Pancreas (tissue), 10 donors: ENCODE measurements at regions of chr10 and their contacts with region 1.

Region 1: DNA sequence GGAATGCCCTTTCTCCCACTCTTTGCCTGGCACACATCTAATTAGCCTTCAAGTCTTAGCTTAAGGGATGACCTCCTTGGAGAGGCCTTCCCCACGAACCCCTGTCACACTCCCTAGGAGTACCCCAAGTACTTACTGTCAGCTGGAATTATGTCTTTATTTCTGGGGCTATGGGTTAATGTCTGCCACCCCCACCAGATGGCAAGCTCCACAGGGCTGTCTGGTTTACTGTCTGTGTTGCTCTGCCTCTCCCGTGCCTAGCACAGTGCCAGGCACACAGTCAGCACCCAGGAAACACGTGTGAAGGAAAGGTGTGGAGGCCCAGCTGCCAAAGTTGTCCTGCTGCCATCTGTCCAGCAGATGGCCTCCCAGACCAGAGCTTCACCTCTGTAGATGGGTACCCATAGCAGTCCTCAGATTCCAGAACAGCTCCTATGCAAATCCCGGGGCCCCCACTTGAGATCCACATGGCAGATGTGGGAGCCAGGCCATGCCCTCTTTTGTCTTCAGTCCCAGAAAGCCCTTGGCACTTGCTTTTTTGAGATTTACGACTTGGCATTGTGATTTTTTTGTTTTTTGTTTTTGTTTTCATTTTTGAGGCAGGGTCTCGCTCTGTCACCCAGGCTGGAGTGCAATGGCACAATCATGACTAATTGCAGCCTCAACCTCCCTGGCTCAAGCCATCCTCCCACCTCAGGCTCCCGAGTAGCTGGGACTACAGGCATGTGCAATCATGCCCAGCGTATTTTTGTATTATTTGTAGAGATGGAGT is 17.2 kb upstream of the PALD1 start:
- DNase-seq: peak in 3 of 6 donors; percentile 31 to 62 (median 44)
- ATAC-seq: peak; percentile 53 to 76 (median 70)
- H3K4me3 ChIP-seq: no peak overlapping the region
- H3K27ac ChIP-seq: peak overlapping the region in 3 of 4 donors; percentile 28 to 59 (median 59)
- H3K4me1 ChIP-seq: peaks cover 0 to 4% (median 3%) of the 10 kb centered on the region in 3 donors
- H3K27me3 ChIP-seq: no peaks in the 10 kb centered on the region
- CTCF ChIP-seq: peak; percentile 45 to 82 (median 72)

Region 2: DNA sequence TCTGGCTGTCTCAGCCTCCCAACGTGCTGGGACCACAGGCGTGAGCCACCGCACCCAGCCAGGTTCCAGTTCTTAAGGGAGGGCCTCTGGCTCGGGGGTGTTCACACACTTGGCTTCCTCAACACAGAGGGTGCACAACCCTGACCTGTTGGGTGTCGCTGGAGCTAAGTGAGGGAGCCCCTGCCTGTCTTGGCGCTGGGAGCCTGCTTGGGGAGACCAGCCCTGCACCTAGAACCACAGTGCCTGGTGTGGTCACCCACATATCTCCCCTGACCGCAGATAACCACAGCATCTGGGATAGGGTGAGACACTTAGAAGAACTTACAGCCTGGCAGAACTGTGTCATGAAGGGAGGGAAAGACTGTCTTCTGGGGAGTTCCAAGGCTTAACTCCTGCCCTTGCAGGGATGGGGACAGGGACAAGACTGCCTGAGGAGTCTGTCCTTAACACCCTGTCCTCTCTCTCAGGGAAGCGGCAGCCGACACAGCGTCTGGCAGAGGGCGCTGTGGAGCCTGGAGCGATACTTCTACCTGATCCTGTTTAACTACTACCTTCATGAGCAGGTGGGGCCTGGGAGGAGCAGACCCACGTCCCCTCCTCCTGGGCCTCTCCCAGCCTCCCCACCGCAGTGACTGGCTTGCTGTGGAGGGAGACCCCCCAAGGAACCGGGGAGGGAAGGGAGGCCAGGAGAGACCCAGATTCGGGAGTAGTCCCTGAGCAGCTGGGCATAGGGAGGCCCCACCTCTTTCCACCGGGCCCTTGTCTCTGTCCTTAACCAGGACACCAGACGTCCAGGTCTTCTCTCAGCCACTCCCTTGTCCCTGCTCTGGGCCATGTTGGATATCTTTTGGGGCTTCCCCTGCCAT is 76.2 kb after region 1 on chr10:
- intact Hi-C with region 1: loop called in 1 of 3 experiments (anchors 5 kb)
- DNase-seq: peak in 3 of 6 donors; percentile 28 to 73 (median 55)
- ATAC-seq: peak in 3 of 4 donors; percentile 47 to 57 (median 49)
- H3K4me3 ChIP-seq: no peak overlapping the region
- H3K27ac ChIP-seq: no peak overlapping the region
- H3K4me1 ChIP-seq: no peaks in the 10 kb centered on the region
- H3K27me3 ChIP-seq: no peaks in the 10 kb centered on the region
- CTCF ChIP-seq: no peak